ENCODE measurements at regions of chr12 and their contacts with region 1.

Region 1: GRCh38 chr12:103548622-103549601 is 38.2 kb upstream of the STAB2 start:
- DNase-seq: peak; percentile 81
- H3K4me3 Mint-ChIP-seq: no peak overlapping the region
- H3K27ac Mint-ChIP-seq: peak overlapping the region; percentile 44
- H3K4me1 Mint-ChIP-seq: peaks cover 11% of the 10 kb centered on the region
- H3K27me3 Mint-ChIP-seq: peaks cover 18% of the 10 kb centered on the region

Region 2: GRCh38 chr12:102484428-102484958 is 1064.4 kb before region 1 on chr12:
- CTCF ChIA-PET with region 1: no interaction called
- POLR2A ChIA-PET with region 1: no interaction called
- intact Hi-C with region 1: loop called (anchors 10 kb)
- DNase-seq: peak; percentile 71
- H3K4me3 Mint-ChIP-seq: no peak overlapping the region
- H3K27ac Mint-ChIP-seq: peak overlapping the region; percentile 76
- H3K4me1 Mint-ChIP-seq: peaks cover 17% of the 10 kb centered on the region
- H3K27me3 Mint-ChIP-seq: peaks cover 3% of the 10 kb centered on the region

Region 3: DNA sequence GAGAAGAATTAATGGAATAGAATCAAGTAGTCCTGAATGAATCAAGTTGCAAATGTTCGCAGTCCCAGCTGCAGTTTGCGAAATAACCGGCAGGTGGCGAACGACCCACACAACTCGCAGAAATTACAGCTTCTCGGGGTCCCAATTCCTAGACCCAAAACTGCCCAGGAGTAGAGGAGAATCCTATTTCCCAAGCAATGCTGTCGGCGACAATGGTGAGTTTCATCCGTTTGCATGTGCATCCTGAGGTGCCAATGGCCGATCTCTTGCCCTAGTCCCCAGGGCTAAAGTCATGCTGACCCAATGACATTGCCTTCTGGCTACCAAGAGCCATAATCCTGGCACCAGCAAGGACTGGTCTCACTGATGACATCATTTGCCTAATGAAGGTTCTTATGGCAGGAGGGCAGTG is 600.0 kb before region 1 on chr12:
- CTCF ChIA-PET with region 1: interaction called, 83 read pairs
- POLR2A ChIA-PET with region 1: no interaction called
- intact Hi-C with region 1: loop called (anchors 1 kb)
- DNase-seq: peak; percentile 60
- H3K4me3 Mint-ChIP-seq: no peak overlapping the region
- H3K27ac Mint-ChIP-seq: no peak overlapping the region
- H3K4me1 Mint-ChIP-seq: peaks cover 9% of the 10 kb centered on the region
- H3K27me3 Mint-ChIP-seq: peaks cover 44% of the 10 kb centered on the region

Region 4: DNA sequence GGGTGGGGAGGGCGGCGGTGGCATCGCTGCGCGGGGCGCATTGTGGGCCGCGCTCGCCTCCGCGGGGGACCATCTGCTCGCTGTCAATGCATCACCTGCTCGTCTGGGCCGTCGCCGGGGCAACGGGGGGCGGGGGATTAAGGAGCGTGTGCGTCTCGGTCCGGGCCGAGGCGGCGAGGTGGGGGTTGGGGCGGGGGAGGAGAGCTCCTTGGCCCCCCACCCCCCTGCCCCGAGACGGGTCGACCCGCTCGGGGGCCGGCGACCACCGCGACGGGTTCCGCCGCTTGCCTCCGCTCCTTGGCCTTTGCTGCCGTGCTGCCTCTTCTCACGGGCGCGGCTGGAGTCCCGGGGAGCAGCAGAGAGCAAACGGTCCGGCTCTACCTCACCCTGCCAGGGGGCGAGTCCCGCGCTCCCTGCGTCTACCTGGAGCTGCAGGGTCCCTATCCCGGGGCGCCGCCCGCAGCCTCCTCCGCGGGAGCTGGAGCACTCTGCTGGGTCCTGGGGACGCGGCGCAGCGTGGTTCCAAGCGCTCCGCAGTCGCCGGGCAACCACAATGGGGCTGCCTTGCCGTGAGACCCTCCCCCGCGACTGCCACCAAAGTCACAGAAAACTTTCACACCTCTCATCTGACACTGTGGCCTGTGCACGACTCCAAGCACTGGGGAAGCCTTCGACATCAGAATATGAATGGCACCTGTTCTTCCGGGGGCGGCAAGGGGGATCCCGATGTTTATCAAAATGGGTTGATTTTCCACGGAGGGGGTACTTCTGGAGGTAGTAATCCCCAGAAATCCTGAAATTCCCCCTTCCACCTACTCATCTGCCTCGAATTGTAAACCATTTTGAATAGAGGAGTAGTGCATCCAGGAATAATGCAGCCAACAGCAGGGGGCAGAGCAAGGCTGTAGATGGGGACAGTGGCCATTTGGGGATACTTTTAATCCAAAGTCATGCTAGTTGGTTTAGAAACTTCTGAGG is 53.1 kb before region 1 on chr12 and contains the start of gene C12orf42:
- CTCF ChIA-PET with region 1: interaction called, 38 read pairs
- POLR2A ChIA-PET with region 1: no interaction called
- intact Hi-C with region 1: loop called (anchors 1 kb)
- DNase-seq: peak; percentile 67
- H3K4me3 Mint-ChIP-seq: peak within 1 kb of the TSS; percentile 52
- H3K27ac Mint-ChIP-seq: no peak within 1 kb of the TSS
- H3K4me1 Mint-ChIP-seq: peaks cover 26% of the 10 kb centered on the region
- H3K27me3 Mint-ChIP-seq: peaks cover 30% of the 10 kb centered on the region
- total RNA-seq, gene C12orf42: not detected

Region 5: DNA sequence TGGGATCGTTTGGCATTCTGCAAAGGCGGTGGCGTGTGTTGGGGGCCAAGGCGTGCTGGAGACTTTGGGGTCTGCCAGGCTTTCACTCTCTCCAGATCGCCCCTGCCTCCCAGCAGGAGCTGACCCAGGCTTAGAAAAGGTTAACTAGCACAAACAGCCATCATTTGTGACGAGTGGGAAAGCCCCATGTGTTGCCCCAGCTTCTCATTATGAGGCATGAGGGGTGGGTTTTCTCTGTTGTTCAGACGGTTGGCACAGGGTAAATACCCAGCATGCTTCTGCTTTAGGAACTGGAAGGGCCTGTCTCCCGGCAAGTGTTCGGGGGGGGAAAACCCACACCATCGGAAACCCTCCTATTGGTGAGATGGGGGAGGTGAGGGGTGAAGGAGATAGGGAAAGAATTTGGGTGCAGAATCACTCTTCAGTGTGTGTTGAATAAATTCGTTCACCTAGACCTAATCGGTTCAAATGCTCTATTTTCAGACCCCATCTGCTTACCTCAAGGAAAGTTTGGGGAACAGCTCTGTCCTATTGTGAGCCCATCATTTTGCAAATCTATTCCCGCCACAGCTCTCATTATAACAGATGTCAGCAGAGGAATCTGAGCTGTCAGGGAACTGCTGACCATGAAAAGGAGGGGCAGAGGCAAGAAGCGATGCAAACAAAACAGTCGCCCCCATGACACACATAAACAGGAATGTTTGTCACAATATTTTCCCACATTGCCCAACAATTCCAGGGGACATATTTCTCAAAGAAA is 18.4 kb before region 1 on chr12:
- CTCF ChIA-PET with region 1: interaction called, 11 read pairs
- POLR2A ChIA-PET with region 1: no interaction called
- intact Hi-C with region 1: no loop called
- DNase-seq: peak; percentile 36
- H3K4me3 Mint-ChIP-seq: no peak overlapping the region
- H3K27ac Mint-ChIP-seq: no peak overlapping the region
- H3K4me1 Mint-ChIP-seq: peaks cover 10% of the 10 kb centered on the region
- H3K27me3 Mint-ChIP-seq: peaks cover 9% of the 10 kb centered on the region